Endothelial cell of umbilical vein (primary cell): ENCODE measurements at regions of chr2 and their contacts with region 1.

Region 1: DNA sequence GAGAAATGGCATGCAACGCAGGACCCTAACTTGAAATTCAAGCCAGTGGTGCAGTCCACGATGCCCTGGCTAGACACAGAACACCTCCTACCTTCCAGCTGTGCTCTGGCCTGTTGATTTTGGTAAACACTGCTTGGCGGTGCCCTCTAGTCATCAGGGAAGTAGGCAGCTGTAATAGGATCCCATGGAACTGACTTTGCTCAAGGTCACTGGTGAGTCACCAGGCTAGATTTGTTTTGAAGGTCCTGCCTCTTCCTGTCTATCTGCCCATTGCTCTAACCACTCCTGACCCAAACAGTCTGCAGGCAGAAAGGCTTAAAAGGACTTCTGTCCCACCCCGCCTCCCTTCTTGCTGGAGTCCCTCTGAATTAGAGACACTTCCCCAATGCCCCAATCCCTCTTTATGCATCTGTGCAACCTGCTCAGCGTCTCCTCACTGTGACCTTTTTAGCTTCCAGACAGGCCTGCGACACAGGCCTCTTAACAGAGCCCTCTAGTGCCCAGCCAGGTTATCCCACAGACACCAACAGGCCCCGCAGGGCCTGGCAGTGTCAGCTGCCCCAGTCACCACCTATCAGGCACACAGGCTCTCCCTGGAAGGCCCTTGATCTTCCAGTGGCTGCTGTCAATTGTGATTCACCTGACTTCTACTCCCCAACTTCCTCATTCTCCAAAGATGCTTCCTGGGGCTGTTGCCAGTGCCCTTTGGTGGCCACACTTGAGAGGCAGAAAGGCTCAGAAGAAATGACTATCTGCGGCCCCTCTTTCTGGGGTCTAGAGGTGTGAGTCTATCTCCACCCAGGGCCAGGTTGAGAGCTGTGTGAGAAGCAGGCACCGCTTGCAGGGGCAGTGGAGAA is 5.2 kb downstream of the TMEM127 start:
- DNase-seq: peak; percentile 94
- H3K4me3 ChIP-seq: no peak overlapping the region
- H3K27ac ChIP-seq: peak overlapping the region; percentile 76
- H3K4me1 ChIP-seq: peaks cover 47% of the 10 kb centered on the region
- H3K27me3 ChIP-seq: no peaks in the 10 kb centered on the region
- CTCF ChIP-seq: peak; percentile 42 to 65
- POLR2A ChIP-seq: no peak

Region 2: GRCh38 chr2:96241900-96242611 is 18.6 kb before region 1 on chr2:
- CTCF ChIA-PET with region 1: interaction called, 10 read pairs
- POLR2A ChIA-PET with region 1: no interaction called
- dilution Hi-C with region 1: no loop called
- intact Hi-C with region 1: loop called (anchors 1 kb)
- DNase-seq: peak; percentile 76
- H3K4me3 ChIP-seq: no peak overlapping the region
- H3K27ac ChIP-seq: peak overlapping the region; percentile 71
- H3K4me1 ChIP-seq: peaks cover 31% of the 10 kb centered on the region
- H3K27me3 ChIP-seq: no peaks in the 10 kb centered on the region
- CTCF ChIP-seq: no peak
- POLR2A ChIP-seq: no peak

Region 3: GRCh38 chr2:96608469-96609455 is 348.1 kb after region 1 on chr2:
- CTCF ChIA-PET with region 1: no interaction called
- POLR2A ChIA-PET with region 1: no interaction called
- dilution Hi-C with region 1: no loop called
- intact Hi-C with region 1: no loop called
- DNase-seq: no peak
- H3K4me3 ChIP-seq: no peak overlapping the region
- H3K27ac ChIP-seq: no peak overlapping the region
- H3K4me1 ChIP-seq: no peaks in the 10 kb centered on the region
- H3K27me3 ChIP-seq: no peaks in the 10 kb centered on the region
- CTCF ChIP-seq: no peak
- POLR2A ChIP-seq: no peak

Region 4: GRCh38 chr2:96888072-96889011 is 627.7 kb after region 1 on chr2:
- CTCF ChIA-PET with region 1: no interaction called
- POLR2A ChIA-PET with region 1: no interaction called
- dilution Hi-C with region 1: no loop called
- intact Hi-C with region 1: no loop called
- DNase-seq: no peak
- H3K4me3 ChIP-seq: no peak overlapping the region
- H3K27ac ChIP-seq: no peak overlapping the region
- H3K4me1 ChIP-seq: no peaks in the 10 kb centered on the region
- H3K27me3 ChIP-seq: no peaks in the 10 kb centered on the region
- CTCF ChIP-seq: no peak
- POLR2A ChIP-seq: no peak